Mammary epithelial cell (primary cell): ENCODE measurements at regions of chr14 and their contacts with region 1.

Region 1: DNA sequence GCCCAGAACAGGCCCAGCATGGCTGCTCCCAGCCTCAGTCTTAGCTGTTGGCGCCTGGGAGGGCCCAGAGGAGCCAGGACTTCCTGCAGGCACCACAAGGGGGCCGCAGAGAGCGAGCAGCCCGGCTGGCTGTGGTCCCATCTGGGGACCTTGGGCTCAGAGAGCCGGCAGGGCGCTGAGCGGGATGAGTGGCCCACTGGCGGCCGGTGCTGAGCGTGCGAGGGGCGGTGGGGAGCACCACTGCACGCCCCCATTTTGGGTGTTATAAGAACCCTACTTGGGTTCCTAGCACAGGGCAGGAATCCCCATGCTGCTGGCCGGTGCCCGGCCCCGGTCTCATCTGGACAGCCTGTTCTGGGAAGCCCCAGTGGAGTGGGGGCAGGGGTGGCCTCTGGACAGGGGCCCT is 25.9 kb upstream of the CRIP2 start:
- DNase-seq: peak; percentile 14
- H3K4me3 ChIP-seq: no peak overlapping the region
- H3K27ac ChIP-seq: no peak overlapping the region
- H3K4me1 ChIP-seq: no peaks in the 10 kb centered on the region
- H3K27me3 ChIP-seq: no peaks in the 10 kb centered on the region
- CTCF ChIP-seq: peak; percentile 56 to 83

Region 2: GRCh38 chr14:105375635-105376057 is 73.1 kb before region 1 on chr14:
- CTCF ChIA-PET with region 1: no interaction called
- dilution Hi-C with region 1: no loop called
- in situ Hi-C with region 1: no loop called
- intact Hi-C with region 1: loop called (anchors 5 kb)
- DNase-seq: no peak
- H3K4me3 ChIP-seq: no peak overlapping the region
- H3K27ac ChIP-seq: no peak overlapping the region
- H3K4me1 ChIP-seq: peaks cover 3% of the 10 kb centered on the region
- H3K27me3 ChIP-seq: no peaks in the 10 kb centered on the region
- CTCF ChIP-seq: no peak

Region 3: DNA sequence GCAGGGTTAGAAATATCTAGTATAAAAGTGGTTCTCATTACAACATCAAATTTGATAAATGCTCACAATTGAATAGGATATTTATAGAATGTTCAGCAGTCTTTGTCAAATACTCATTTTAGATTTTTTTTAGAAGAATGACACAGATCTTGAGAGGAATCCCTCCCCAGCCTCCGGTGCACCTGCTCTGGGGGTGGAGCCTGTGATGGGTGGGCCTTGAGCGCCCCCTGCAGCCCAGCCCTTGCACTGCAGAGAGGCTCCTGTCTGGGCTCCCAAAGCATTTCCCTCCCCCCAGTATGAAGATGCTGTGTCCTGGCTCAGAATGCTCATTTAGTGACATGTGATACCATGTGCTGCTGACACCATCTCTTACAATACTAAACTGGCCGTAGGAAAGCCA is 870.0 kb after region 1 on chr14:
- CTCF ChIA-PET with region 1: no interaction called
- dilution Hi-C with region 1: no loop called
- in situ Hi-C with region 1: no loop called
- intact Hi-C with region 1: no loop called
- DNase-seq: no peak
- H3K4me3 ChIP-seq: no peak overlapping the region
- H3K27ac ChIP-seq: no peak overlapping the region
- H3K4me1 ChIP-seq: no peaks in the 10 kb centered on the region
- H3K27me3 ChIP-seq: no peaks in the 10 kb centered on the region
- CTCF ChIP-seq: no peak